ENCODE measurements at regions of chr6 and their contacts with region 1.

Region 1: GRCh38 chr6:88512951-88513350 is 346.8 kb upstream of the CNR1 start:
- DNase-seq: no peak
- CTCF ChIP-seq: no peak

Region 2: DNA sequence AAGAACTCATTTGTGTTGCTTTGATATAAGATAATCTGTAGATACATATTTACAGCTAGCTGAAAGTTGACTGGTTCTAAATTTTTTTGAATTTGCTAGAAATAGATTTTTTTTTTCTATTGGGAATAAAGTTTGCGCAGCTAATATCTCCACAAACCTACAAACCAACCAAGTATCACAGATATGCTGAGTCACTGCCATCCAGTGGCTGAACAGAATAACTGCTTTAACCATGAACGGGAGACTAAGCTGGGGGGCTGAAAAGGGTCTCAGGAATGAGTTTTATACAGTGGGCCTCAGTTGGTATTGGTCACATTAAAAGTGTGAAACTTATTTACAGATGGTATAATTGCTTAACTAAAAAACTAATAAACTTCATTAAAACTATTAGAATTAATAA is 20.1 kb before region 1 on chr6:
- CTCF ChIA-PET with region 1: interaction called, 13 read pairs
- POLR2A ChIA-PET with region 1: no interaction called
- DNase-seq: no peak
- CTCF ChIP-seq: peak; percentile 29

Measured in GM10248 (cell line).